ENCODE measurements at regions of chrX and their contacts with region 1.

Region 1: GRCh38 chrX:50081282-50081889 is 119.4 kb downstream of the AKAP4 start:
- DNase-seq: peak; percentile 62
- ATAC-seq: peak; percentile 83 to 88
- H3K4me3 ChIP-seq: no peak overlapping the region
- H3K27ac ChIP-seq: no peak overlapping the region
- H3K4me1 ChIP-seq: no peaks in the 10 kb centered on the region
- H3K27me3 ChIP-seq: no peaks in the 10 kb centered on the region
- CTCF ChIP-seq: peak; percentile 31

Region 2: DNA sequence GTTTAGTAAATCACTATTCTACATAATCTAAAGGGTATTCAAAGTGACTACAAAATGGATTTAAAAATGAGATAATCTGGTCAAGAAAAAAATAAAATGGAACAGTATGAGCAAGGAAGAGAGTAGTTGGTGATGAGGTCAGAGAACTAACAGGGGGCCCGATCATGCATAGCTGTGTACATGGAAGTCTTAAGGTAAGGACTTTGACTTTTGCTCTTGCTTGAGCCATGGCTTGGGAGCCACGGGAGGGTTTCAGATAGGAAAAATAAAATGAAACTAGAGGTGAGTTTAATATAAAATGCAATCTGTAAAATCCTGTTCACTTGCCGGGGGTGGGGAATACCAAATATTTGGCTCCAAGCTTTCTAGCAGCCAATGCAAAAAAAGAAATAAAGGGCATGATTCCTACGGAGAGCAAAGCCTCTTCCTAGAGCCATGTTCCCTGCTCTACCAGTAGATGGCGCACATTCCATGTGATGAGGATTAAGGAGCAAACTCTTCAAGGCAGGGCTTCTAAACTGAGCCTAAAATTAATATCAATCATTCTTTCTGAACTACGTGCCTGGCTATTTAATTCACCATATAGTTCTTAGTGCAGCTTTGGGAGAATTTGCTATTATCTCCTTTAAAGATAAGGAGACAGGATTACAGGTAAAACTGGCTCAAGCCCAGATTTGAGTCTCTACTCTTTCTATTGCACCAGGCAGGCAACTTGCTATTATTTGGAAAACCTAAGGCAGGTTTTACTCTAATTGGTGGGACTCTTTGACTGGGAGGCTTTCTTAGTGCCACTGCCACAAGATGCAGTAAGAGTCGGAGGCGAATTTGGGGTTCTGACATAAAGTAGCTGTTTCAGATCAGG is 165.8 kb before region 1 on chrX:
- intact Hi-C with region 1: loop called (anchors 10 kb)
- DNase-seq: no peak
- ATAC-seq: peak; percentile 65 to 84
- H3K4me3 ChIP-seq: no peak overlapping the region
- H3K27ac ChIP-seq: no peak overlapping the region
- H3K4me1 ChIP-seq: no peaks in the 10 kb centered on the region
- H3K27me3 ChIP-seq: no peaks in the 10 kb centered on the region
- CTCF ChIP-seq: peak; percentile 77

Region 3: GRCh38 chrX:49972328-49972860 is 109.0 kb before region 1 on chrX:
- intact Hi-C with region 1: no loop called
- DNase-seq: no peak
- ATAC-seq: no peak
- H3K4me3 ChIP-seq: no peak overlapping the region
- H3K27ac ChIP-seq: no peak overlapping the region
- H3K4me1 ChIP-seq: no peaks in the 10 kb centered on the region
- H3K27me3 ChIP-seq: no peaks in the 10 kb centered on the region
- CTCF ChIP-seq: no peak

Region 4: DNA sequence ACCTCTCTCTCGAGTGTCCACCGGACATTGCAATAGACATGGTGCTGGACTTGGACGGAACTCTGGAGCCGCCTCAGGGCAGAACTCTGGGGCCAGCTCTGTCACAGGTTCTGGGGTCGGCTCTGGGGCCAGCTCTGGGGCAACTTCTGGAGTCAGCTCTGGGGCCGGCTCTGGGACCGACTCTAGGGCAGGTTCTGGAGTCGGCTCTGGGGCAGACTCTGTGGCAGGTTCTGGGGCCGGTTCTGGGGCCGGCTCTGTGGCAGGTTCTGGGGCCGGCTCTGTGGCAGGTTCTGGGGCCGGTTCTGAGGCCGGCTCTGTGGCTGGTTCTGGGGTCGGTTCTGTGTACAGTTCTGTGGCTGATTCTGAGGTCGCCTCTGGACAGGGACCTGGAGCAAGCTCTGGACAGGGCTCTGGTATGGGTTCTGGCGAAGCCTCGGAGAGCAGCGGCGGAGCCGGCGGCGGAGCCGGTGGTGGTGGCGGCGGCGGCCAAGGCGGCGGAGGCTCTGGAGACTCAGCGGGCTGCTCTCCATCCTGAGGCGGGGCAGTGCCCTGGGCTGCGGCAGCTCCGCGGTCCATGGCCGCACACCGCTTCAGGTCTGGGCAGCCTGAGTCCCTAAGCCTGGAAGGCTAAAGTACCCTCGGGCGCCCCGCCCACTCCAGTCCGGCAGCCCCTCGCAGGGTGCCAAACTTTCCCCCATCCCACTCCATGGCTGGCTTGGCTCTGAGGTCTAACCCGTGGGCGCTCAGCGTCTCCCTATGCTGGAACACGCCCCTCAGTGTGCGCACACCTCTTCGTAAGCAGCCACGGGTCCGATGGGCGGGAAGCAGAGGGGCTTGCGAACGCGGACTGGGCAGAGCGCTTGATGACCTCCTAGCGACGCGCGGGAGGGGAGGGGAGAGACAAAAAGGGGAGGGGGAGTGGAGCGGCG is 389.0 kb after region 1 on chrX and contains the start of gene DGKK:
- intact Hi-C with region 1: no loop called
- DNase-seq: no peak
- ATAC-seq: peak; percentile 23 to 47
- H3K4me3 ChIP-seq: no peak within 1 kb of the TSS
- H3K27ac ChIP-seq: no peak within 1 kb of the TSS
- H3K4me1 ChIP-seq: no peaks in the 10 kb centered on the region
- H3K27me3 ChIP-seq: peaks cover 48% of the 10 kb centered on the region
- CTCF ChIP-seq: no peak
- total RNA-seq, gene DGKK: 0.21 TPM